Ascending aorta (tissue), 2 donors: ENCODE measurements at regions of chr5 and their contacts with region 1.

Region 1: GRCh38 chr5:150143350-150144245 is 12.0 kb downstream of the PDGFRB start:
- DNase-seq: peak; percentile 71 to 95
- H3K4me3 ChIP-seq: peak overlapping the region; percentile 11 to 46
- H3K27ac ChIP-seq: peak overlapping the region; percentile 98 to 99
- H3K4me1 ChIP-seq: peaks cover 68 to 94% of the 10 kb centered on the region in 2 donors
- H3K27me3 ChIP-seq: no peaks in the 10 kb centered on the region
- CTCF ChIP-seq: no peak

Region 2: GRCh38 chr5:149824846-149825245 is 318.8 kb before region 1 on chr5:
- intact Hi-C with region 1: no loop called
- DNase-seq: no peak
- H3K4me3 ChIP-seq: no peak overlapping the region
- H3K27ac ChIP-seq: no peak overlapping the region
- H3K4me1 ChIP-seq: no peaks in the 10 kb centered on the region
- H3K27me3 ChIP-seq: no peaks in the 10 kb centered on the region
- CTCF ChIP-seq: no peak

Region 3: DNA sequence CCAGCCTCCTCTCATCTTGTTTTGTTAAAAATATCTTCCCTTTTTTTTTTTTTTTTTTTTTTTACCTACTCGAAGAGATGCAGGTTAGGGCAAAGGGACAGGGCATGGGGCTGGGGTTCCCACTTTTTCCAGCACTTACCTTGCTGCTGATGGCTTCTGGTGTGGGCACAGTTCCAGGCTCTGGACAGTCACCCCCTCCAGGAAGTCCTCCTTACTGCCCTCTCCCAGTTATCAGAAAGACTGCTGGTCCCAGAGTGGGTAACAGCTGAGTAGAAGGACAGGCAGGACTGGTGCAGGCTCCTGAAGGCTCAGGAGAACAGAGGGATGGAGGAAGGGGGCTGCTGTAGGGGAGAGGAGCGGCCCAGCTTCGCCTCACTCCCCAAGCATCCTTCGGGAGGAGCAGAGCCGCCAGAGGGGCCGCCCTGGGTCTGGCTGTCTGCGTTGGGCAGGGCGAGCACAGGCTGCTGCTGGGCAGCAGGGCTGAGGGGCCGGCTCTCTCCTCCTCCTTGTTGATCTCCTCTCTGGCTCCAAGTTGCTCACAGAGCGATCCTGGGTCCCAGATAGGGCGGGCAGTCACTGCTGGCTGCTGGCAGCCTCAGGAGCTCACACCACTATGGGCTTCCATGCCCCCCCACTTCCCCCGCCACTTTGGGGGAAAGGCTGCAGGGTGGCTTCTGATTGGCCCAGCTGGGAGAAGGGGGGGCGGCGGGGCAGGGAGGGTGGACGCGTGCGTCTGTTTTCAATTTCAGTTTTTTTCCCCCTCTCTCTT is 11.8 kb after region 1 on chr5 and contains the start of gene PDGFRB:
- intact Hi-C with region 1: loop called (anchors 2 kb)
- DNase-seq: peak; percentile 83 to 97
- H3K4me3 ChIP-seq: peak within 1 kb of the TSS; percentile 57 to 90
- H3K27ac ChIP-seq: peak within 1 kb of the TSS; percentile 98 to 99
- H3K4me1 ChIP-seq: peaks cover 38 to 60% of the 10 kb centered on the region in 2 donors
- H3K27me3 ChIP-seq: no peaks in the 10 kb centered on the region
- CTCF ChIP-seq: no peak
- total RNA-seq, gene PDGFRB: 341 TPM